ENCODE measurements at regions of chr7 and their contacts with region 1.

Region 1: GRCh38 chr7:98133181-98133580 is 26.5 kb downstream of the LMTK2 start:
- DNase-seq: no peak
- ATAC-seq: no peak
- H3K4me3 ChIP-seq: peak overlapping the region in 2 of 3 experiments; percentile 53 to 65; a peak in 3 of 6 replicates
- H3K27ac ChIP-seq: peak overlapping the region; percentile 91
- H3K4me1 ChIP-seq: peaks cover 90% of the 10 kb centered on the region
- H3K27me3 ChIP-seq: no peaks in the 10 kb centered on the region
- CTCF ChIP-seq: no peak
- EP300 ChIP-seq: no peak
- POLR2A ChIP-seq: no peak
- RAD21 ChIP-seq: no peak

Region 2: GRCh38 chr7:98119256-98119918 is 13.8 kb before region 1 on chr7:
- CTCF ChIA-PET with region 1: no interaction called
- POLR2A ChIA-PET with region 1: interaction called, 54 read pairs
- in situ Hi-C with region 1: no loop called
- intact Hi-C with region 1: no loop called
- DNase-seq: peak; percentile 53
- ATAC-seq: peak; percentile 29; the same call in 1 of the 3 replicates
- H3K4me3 ChIP-seq: no peak overlapping the region
- H3K27ac ChIP-seq: peak overlapping the region; percentile 9
- H3K4me1 ChIP-seq: peaks cover 89% of the 10 kb centered on the region
- H3K27me3 ChIP-seq: no peaks in the 10 kb centered on the region
- CTCF ChIP-seq: no peak
- EP300 ChIP-seq: no peak
- POLR2A ChIP-seq: no peak
- RAD21 ChIP-seq: no peak

Measured in HepG2 (cell line).